Right cardiac atrium (tissue), 5 donors: ENCODE measurements at regions of chr2 and their contacts with region 1.

Region 1: DNA sequence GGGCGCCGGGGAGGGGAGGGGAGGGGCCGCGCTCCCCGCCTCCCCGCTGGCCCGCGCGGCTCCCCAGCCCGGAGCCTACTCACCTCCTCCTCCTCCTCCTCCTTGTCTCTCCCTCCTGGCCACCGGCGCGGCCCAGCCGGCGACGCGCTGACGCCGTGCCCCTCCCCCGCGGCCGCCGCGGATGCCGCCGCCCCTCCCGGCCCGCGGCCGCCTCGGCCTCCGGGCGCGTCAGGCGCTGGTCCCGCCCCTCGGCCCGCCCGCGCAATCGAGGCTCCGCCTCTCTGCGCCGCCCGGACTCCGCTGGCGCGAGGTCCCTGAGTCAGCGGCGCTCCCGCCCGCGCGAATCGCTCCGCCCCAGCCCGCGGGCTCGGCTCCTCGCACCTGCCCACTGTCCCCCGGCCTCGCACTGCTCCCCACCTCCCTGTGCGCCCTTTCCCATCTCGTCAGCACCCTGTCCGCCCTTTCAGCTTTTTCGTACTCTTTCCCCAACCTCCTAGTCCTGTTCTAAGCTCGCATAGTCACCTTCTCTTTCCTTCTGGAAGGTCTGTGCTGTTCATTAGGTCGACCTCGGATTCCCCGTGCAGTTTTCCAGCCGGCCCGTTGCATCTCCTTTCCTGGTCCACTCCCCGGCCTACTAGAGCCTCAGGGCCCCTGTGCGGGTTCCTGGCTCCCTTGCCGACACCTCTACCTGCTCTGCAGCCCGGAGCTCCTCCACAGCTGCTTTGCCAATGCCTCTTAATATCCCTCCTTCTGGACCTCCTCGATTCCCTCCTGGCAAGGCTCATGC is 187.4 kb downstream of the ZEB2 start:
- DNase-seq: peak; percentile 87 to 96 (median 95)
- ATAC-seq: peak; percentile 95 to 96
- H3K4me3 ChIP-seq: peak overlapping the region; percentile 84
- H3K27ac ChIP-seq: peak overlapping the region; percentile 88
- H3K4me1 ChIP-seq: no peaks in the 10 kb centered on the region
- H3K27me3 ChIP-seq: no peaks in the 10 kb centered on the region

Region 2: DNA sequence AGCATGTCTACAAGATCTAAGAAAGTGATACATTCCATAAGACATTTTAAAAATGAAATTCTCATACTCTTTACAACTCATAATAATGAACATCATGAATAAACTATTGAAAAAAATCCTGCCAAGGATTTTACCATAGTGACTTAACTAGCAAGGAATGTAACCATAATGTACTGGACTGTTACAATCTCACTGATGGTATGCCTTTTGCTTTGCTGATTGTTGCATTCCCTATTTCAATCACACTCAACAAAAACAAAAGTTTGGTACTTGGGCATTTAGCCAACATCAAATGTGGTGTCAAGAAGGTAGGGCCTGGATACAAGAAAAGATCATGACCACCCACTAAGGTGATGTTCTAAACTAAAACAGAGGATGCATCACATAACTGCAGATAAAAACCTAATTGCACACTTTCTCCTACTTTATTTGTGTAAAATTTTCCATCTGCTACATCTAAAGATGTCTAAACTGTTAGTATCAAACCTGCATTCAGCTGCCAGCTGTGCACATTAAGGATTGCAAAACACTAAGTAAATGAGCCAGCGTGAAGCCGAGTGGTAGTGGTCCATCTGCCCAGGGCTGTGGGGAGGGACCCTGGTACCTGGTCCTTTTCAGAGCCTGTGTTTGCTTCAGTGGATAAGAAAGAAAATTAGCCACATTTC is 377.0 kb before region 1 on chr2:
- intact Hi-C with region 1: no loop called
- DNase-seq: no peak
- ATAC-seq: no peak
- H3K4me3 ChIP-seq: no peak overlapping the region
- H3K27ac ChIP-seq: no peak overlapping the region
- H3K4me1 ChIP-seq: peaks cover 1% of the 10 kb centered on the region
- H3K27me3 ChIP-seq: no peaks in the 10 kb centered on the region

Region 3: GRCh38 chr2:144382849-144383248 is 50.3 kb after region 1 on chr2:
- intact Hi-C with region 1: loop called in 2 of 4 experiments (anchors 10 kb)
- DNase-seq: no peak
- ATAC-seq: peak; percentile 47 to 58
- H3K4me3 ChIP-seq: no peak overlapping the region
- H3K27ac ChIP-seq: no peak overlapping the region
- H3K4me1 ChIP-seq: peaks cover 3% of the 10 kb centered on the region
- H3K27me3 ChIP-seq: no peaks in the 10 kb centered on the region